Mammary epithelial cell (primary cell): ENCODE measurements at regions of chr17 and their contacts with region 1.

Region 1: DNA sequence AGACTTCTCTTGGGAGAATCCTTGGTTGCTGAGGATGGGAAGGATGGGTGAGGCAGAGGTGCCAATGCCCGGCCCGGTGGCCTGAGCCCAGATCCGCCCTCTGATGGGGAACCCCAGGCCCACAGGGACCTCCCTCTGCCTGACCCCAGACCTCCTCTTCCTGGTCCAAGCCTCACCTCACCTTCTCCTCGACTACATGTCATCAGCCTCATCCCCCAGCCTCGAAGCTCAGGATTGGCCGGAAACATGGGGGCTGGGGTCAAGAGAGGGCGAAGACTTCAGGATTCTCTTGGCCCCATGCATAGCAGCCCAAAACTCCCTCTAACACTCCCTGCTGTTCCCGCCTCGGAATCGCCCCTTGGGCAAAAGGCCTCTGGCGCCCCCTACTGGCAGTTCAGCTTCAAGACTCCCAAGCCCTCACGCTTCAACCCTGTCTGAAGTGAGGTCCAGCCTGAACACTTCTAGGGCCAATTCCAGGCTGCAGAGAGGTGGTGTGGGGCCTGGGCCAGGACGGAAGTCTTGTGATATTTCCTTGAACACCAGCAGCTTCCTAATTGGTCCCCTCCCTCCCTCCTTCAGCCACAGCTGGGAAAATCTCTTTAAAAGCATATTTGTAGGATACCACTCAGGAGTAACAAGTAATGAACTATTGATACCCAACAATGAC is 47.2 kb downstream of the ARHGAP27 start:
- DNase-seq: peak; percentile 70
- H3K4me3 ChIP-seq: no peak overlapping the region
- H3K27ac ChIP-seq: no peak overlapping the region
- H3K4me1 ChIP-seq: peaks cover 30% of the 10 kb centered on the region
- H3K27me3 ChIP-seq: no peaks in the 10 kb centered on the region
- CTCF ChIP-seq: peak; percentile 98 to 99

Region 2: DNA sequence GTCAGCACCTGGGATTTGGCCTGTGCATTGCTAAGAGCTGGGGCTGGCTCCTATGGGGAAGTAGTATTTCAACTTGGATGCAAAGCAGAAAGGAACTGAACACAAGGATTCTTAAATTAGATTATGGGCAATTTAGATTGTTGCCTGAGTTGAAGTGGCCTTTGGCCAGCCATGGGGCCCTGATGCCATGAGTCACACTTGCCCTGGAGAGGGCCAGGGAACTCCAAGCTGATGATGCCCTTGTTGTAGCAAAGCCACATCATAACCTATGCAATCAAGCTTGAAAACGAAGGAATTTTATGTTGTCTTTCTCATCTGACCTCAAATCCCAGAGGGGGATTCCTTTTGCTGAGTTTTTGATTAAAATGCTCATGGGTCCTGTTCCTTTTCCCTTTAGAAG is 119.6 kb before region 1 on chr17:
- CTCF ChIA-PET with region 1: no interaction called
- dilution Hi-C with region 1: loop called (anchors 5 kb)
- in situ Hi-C with region 1: no loop called
- intact Hi-C with region 1: no loop called
- DNase-seq: peak; percentile 27
- H3K4me3 ChIP-seq: no peak overlapping the region
- H3K27ac ChIP-seq: no peak overlapping the region
- H3K4me1 ChIP-seq: peaks cover 12% of the 10 kb centered on the region
- H3K27me3 ChIP-seq: no peaks in the 10 kb centered on the region
- CTCF ChIP-seq: no peak

Region 3: GRCh38 chr17:45277216-45277849 is 108.1 kb before region 1 on chr17:
- CTCF ChIA-PET with region 1: interaction called, 6 read pairs
- dilution Hi-C with region 1: no loop called
- in situ Hi-C with region 1: loop called (anchors 5 kb)
- intact Hi-C with region 1: loop called (anchors 1 kb)
- DNase-seq: peak; percentile 72
- H3K4me3 ChIP-seq: no peak overlapping the region
- H3K27ac ChIP-seq: no peak overlapping the region
- H3K4me1 ChIP-seq: no peaks in the 10 kb centered on the region
- H3K27me3 ChIP-seq: no peaks in the 10 kb centered on the region
- CTCF ChIP-seq: peak; percentile 79 to 83

Region 4: DNA sequence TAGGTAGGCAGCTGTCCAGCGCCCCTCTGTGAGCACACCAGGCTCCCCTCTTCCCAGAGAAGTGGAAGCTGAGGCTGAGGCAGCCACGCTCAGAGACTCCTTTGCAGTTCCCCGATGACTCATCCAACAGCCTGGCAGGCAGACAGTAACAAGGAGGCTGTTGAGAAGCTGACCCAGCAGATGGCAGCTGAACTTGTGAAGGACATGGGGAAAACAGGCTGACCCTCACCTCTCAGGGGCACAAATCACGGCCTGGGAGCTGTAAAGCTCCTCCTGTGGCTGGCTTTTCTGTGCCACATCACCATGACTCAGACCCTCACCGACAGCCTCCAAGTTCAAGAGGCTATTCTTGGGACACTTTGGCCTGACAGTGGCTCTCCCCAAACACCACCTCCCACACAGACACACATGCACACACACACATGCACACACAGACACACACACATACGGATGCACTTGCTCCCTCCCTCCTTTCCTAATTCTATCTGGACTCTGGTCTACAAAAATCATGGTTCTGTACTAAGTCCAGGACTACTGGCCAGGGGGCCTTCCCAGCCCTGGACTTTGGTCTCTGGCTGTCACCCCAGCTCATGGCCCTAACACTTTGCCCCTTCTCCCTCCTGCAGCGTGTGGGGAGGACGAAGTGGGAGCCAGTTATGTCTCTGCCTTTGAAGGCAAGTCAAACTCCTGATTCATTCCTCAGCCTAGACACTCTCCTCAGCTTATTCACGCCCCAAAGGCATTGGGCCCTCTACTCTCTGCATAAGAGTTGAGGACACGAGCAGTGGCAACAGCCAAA is 91.9 kb before region 1 on chr17:
- CTCF ChIA-PET with region 1: interaction called, 9 read pairs
- dilution Hi-C with region 1: no loop called
- in situ Hi-C with region 1: no loop called
- intact Hi-C with region 1: loop called (anchors 1 kb)
- DNase-seq: peak; percentile 81
- H3K4me3 ChIP-seq: no peak overlapping the region
- H3K27ac ChIP-seq: no peak overlapping the region
- H3K4me1 ChIP-seq: peaks cover 53% of the 10 kb centered on the region
- H3K27me3 ChIP-seq: no peaks in the 10 kb centered on the region
- CTCF ChIP-seq: peak in 1 of 2 donors; percentile 30

Region 5: GRCh38 chr17:45307290-45308015 is 78.0 kb before region 1 on chr17:
- CTCF ChIA-PET with region 1: no interaction called
- dilution Hi-C with region 1: loop called (anchors 5 kb)
- in situ Hi-C with region 1: no loop called
- intact Hi-C with region 1: no loop called
- DNase-seq: peak; percentile 78
- H3K4me3 ChIP-seq: no peak overlapping the region
- H3K27ac ChIP-seq: peak overlapping the region; percentile 63
- H3K4me1 ChIP-seq: peaks cover 37% of the 10 kb centered on the region
- H3K27me3 ChIP-seq: no peaks in the 10 kb centered on the region
- CTCF ChIP-seq: no peak

Region 6: GRCh38 chr17:45640141-45640850 is 254.8 kb after region 1 on chr17:
- CTCF ChIA-PET with region 1: no interaction called
- dilution Hi-C with region 1: loop called (anchors 10 kb)
- in situ Hi-C with region 1: no loop called
- intact Hi-C with region 1: no loop called
- DNase-seq: peak; percentile 39
- H3K4me3 ChIP-seq: no peak overlapping the region
- H3K27ac ChIP-seq: no peak overlapping the region
- H3K4me1 ChIP-seq: no peaks in the 10 kb centered on the region
- H3K27me3 ChIP-seq: no peaks in the 10 kb centered on the region
- CTCF ChIP-seq: peak; percentile 97 to 99